Endothelial cell of umbilical vein (primary cell): ENCODE measurements at regions of chr6 and their contacts with region 1.

Region 1: DNA sequence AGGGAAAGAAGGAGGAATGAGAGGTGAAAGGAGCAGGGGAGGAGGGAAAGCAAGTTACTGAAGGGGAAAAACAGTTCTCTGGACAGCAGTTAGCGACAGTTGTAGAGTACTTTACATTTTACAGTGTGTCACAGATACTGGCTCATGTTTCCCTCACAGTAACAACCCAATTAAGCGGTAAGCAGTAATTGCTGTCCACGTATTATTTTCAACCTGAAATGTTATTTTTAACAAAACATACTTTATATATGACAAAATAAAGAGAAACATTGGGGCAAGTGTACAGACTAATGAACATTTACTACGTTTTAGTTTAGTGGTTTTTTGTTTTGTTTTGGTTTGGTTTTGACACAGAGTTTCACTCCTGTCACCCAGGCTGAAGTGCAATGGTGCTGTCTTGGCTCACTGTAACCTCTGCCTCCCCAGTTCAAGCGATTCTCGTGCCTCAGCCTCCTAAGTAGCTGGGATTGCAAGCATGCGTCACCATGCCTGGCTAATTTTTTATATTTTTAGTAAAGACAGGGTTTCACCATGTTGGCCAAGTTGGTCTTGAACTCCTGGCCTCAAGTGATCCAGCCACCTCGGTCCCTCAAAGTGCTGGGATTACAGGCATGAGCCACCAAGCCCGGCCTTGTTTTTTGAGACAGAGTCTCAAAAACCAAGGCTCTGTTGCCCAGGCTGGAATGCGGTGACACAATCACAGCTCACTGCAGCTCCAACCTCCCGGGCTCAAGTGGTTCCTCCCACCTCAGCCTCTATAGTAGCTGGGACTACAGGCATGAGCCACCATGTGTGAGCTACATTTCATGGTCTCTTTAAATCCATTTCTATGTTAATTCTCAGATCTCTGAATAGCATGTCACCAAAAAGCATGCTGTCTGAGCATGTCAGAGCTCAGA is 22.6 kb upstream of the BTN3A2 start:
- DNase-seq: no peak
- H3K4me3 ChIP-seq: no peak overlapping the region
- H3K27ac ChIP-seq: no peak overlapping the region
- H3K4me1 ChIP-seq: peaks cover 2% of the 10 kb centered on the region
- H3K27me3 ChIP-seq: peaks cover 0 to 3% of the 10 kb centered on the region in 2 experiments
- CTCF ChIP-seq: no peak
- POLR2A ChIP-seq: no peak

Region 2: GRCh38 chr6:26249957-26250697 is 92.2 kb before region 1 on chr6:
- CTCF ChIA-PET with region 1: no interaction called
- POLR2A ChIA-PET with region 1: no interaction called
- dilution Hi-C with region 1: no loop called
- intact Hi-C with region 1: no loop called
- DNase-seq: peak; percentile 87
- H3K4me3 ChIP-seq: peak overlapping the region; percentile 27 to 85 (median 49)
- H3K27ac ChIP-seq: peak overlapping the region; percentile 67
- H3K4me1 ChIP-seq: peaks cover 3% of the 10 kb centered on the region
- H3K27me3 ChIP-seq: no peaks in the 10 kb centered on the region
- CTCF ChIP-seq: peak; percentile 28 to 52
- POLR2A ChIP-seq: peak; percentile 87

Region 3: DNA sequence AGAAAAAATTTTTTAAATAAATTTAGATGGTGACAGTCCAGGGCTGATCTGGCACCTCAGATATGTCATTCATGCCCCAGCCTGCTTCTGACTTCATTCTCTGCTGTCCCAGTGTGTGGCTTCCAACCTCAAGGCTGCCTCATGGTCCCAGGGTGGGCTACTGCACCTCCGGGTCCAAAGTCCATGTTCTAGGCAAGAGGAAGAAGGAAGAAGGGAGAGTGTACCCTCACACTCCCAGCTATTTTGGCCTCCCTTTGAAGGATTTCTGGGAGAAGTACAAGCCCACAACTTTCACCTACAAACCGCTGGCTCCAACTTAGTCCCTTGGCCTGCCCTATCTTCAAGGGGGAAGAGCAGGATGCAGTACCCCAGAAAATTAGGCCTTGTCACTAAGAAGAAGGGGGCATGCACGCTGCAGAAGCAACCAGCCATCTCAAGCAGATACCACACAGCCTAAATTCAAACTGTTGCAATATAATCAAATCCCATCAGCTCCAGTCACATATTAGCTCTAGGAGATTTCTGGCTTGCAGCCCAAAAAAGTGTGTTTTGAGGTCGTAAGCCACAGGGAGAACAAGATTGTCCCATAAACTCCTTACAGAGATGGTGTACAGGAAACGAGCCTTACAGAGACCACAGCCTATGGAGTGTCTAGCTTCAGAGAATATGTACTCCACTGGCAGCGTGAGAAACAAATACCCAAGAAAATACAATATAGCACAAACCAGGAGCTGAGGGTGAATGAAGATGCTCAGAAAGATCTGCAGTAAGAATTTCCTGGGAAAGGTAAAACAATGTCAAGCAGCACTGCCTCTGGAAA is 21.7 kb after region 1 on chr6:
- CTCF ChIA-PET with region 1: interaction called, 13 read pairs
- POLR2A ChIA-PET with region 1: no interaction called
- dilution Hi-C with region 1: no loop called
- intact Hi-C with region 1: no loop called
- DNase-seq: no peak
- H3K4me3 ChIP-seq: peak overlapping the region; percentile 62 to 93 (median 75)
- H3K27ac ChIP-seq: peak overlapping the region; percentile 69
- H3K4me1 ChIP-seq: peaks cover 9% of the 10 kb centered on the region
- H3K27me3 ChIP-seq: no peaks in the 10 kb centered on the region
- CTCF ChIP-seq: no peak
- POLR2A ChIP-seq: no peak

Region 4: DNA sequence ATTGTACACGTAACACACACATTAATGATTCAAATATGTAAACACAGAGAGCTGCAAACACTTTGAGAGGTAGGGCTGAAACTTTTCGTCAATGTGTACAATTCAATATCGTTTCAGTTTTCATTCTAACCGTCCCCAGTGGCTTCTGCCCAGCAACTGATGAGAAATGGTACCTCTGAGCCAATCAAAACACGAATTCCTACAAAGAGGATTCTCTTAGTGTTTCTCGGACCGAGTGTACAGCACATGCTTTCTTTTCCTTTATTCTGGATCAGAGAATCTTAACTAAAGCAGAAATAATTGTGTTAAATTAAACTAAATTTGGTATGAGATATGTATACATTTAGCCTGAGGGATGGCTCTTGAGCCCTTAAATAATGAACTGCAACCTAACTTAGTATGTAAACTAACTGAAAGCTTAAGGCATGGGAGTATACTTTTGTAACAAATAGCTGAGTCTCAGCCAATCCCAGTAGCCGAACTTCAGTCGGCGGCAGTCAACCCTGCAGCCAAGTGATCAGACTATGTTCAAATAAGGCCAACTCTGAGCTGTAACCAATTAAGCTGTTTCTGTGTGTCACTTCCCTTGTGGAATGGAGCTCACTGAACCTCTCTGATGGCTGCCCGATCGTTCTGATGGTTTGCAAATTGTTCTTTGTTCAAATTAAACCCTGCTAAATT is 131.5 kb after region 1 on chr6:
- CTCF ChIA-PET with region 1: interaction called, 12 read pairs
- POLR2A ChIA-PET with region 1: no interaction called
- dilution Hi-C with region 1: no loop called
- intact Hi-C with region 1: no loop called
- DNase-seq: peak; percentile 98
- H3K4me3 ChIP-seq: peak overlapping the region; percentile 35 to 73 (median 39)
- H3K27ac ChIP-seq: peak overlapping the region; percentile 90
- H3K4me1 ChIP-seq: peaks cover 23% of the 10 kb centered on the region
- H3K27me3 ChIP-seq: no peaks in the 10 kb centered on the region
- CTCF ChIP-seq: no peak
- POLR2A ChIP-seq: peak; percentile 75

Region 5: GRCh38 chr6:26532699-26533531 is 190.6 kb after region 1 on chr6:
- CTCF ChIA-PET with region 1: interaction called, 42 read pairs
- POLR2A ChIA-PET with region 1: no interaction called
- dilution Hi-C with region 1: loop called (anchors 25 kb)
- intact Hi-C with region 1: loop called (anchors 1 kb)
- DNase-seq: peak; percentile 96
- H3K4me3 ChIP-seq: peak overlapping the region; percentile 65 to 74 (median 65)
- H3K27ac ChIP-seq: peak overlapping the region; percentile 4
- H3K4me1 ChIP-seq: peaks cover 14% of the 10 kb centered on the region
- H3K27me3 ChIP-seq: no peaks in the 10 kb centered on the region
- CTCF ChIP-seq: no peak
- POLR2A ChIP-seq: no peak

Region 6: DNA sequence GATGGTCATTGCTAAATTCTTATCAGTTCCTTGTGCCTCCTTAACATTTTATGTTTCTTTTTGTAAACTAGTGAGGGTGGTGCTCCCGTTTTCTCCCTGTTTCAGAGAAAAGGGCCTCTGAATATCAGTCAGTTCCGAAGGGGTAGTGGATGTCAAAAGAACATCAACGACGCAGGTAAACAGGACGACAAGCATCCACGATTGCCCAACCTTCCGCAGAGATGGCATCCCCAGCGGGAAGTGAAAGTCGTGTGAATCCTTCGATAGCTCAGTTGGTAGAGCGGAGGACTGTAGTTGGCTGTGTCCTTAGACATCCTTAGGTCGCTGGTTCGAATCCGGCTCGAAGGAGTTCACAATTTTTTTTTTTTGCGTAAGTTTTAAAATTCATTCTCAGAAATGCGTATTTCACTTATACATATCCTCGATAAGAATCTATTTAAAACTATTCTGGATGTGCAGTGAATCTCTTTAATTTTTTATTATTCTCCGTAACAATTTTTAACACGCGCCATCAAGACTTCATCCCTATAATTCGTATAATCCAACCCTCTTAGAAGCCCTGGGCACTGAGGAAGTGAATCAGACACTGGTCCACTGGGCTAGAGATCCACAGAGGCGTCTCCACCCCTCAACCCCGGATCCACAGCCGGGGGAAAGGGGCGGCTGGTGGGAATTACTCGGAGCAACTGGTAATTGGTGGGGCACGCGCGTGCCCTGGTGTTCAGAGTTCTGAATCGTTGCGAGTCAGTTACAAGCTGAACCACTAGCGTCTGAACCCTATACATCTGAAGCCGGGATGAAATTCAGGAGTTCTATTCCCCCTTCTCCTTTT is 226.5 kb after region 1 on chr6:
- CTCF ChIA-PET with region 1: interaction called, 96 read pairs
- POLR2A ChIA-PET with region 1: no interaction called
- dilution Hi-C with region 1: no loop called
- intact Hi-C with region 1: loop called (anchors 1 kb)
- DNase-seq: peak; percentile 97
- H3K4me3 ChIP-seq: peak overlapping the region; percentile 50 to 95 (median 90)
- H3K27ac ChIP-seq: no peak overlapping the region
- H3K4me1 ChIP-seq: peaks cover 6% of the 10 kb centered on the region
- H3K27me3 ChIP-seq: no peaks in the 10 kb centered on the region
- CTCF ChIP-seq: peak in 1 of 2 donors; percentile 46
- POLR2A ChIP-seq: no peak